ENCODE measurements at regions of chr1 and their contacts with region 1.

Region 1: DNA sequence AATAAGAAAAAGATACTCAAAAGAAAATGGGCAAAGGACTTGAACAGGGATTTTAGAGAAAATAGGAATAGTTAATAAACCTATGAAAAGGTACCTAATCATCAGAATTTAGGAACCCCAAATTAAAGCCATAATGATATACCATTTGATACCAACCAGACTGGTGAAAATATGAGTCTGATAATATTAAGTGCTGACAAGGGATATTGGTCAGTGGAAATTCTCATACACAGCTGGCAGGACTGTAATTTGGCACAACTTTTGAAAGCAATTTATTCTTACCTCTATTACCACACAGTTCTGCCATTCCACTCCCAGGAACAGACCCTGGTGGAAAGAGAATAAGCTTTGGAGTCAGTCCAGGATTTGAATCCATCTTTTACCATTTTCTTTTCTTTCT is 111.3 kb downstream of the KIF26B start:
- DNase-seq: no peak
- H3K4me3 ChIP-seq: no peak overlapping the region
- CTCF ChIP-seq: no peak

Region 2: DNA sequence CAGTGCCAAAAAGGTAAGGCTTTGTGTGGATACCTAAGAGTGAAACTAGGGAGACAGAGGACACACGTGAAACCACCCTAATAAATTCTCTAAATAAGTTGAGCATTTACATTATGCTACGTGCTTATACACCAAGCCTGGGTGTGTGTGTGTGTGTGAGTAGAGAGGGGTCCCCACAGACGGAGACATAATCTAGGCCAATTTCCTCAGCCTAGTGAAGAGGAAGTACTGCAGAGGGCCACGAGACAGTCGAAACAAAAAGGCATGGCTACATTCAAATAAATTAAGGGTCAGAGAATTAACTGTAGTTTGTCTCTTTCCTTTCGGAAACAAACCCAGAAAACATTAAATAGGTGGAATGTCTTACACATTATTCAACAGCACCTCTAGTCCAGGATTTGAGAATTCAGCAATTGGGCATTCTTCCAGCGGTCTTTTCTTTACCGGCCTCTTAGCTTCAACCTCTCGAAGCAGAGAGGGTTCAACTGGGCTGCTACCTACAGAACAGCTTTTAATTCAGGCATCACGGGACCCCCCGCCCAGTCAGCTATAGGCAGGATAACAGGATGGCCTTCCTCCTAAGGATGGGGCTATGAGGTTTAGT is 538.1 kb before region 1 on chr1:
- in situ Hi-C with region 1: no loop called
- DNase-seq: no peak
- H3K4me3 ChIP-seq: no peak overlapping the region
- CTCF ChIP-seq: no peak

Region 3: GRCh38 chr1:245319105-245319504 is 53.0 kb after region 1 on chr1:
- in situ Hi-C with region 1: loop called (anchors 5 kb)
- DNase-seq: no peak
- H3K4me3 ChIP-seq: no peak overlapping the region
- CTCF ChIP-seq: no peak